ENCODE measurements at regions of chr14 and their contacts with region 1.

Region 1: DNA sequence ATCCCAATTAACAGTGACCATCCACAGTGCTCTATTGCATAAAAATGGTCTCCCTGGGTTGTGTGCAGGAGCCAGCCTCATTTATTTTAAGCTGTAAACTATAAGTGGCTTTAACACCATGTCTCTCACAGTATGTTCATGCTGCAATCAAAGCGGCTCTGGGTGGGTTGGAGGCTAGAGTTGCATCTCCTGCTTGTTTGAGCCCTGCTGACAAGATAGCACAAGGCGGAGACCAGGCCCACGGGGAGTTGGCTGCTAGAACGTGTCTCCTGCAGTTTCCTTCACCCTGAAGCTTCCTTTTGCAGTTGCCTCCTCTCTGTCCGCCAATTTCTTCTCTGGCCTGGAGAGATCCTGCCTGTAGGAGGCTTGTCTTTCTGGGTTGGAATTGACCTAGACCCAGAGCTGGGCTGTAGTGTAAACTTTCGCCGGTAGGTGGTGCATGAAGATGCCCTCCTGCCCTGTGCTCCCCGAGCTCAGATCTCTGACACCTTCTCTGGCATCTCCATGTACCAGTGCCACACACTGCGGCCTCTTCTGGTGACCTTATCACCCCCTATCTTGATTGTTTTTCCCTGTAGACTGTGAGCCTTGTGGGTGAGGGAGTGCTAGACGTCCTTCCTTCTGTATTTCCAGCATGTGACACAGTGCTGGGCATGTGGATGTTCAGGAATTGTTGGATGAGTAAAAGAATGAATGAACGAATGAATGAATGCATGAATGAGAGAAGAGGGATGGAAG is 10.3 kb downstream of the OTUB2 start:
- DNase-seq: peak; percentile 85
- H3K4me3 Mint-ChIP-seq: no peak overlapping the region
- H3K27ac Mint-ChIP-seq: no peak overlapping the region
- H3K4me1 Mint-ChIP-seq: peaks cover 7% of the 10 kb centered on the region
- H3K27me3 Mint-ChIP-seq: no peaks in the 10 kb centered on the region

Region 2: GRCh38 chr14:93797536-93797935 is 238.9 kb before region 1 on chr14:
- CTCF ChIA-PET with region 1: no interaction called
- POLR2A ChIA-PET with region 1: no interaction called
- DNase-seq: no peak
- H3K4me3 Mint-ChIP-seq: no peak overlapping the region
- H3K27ac Mint-ChIP-seq: no peak overlapping the region
- H3K4me1 Mint-ChIP-seq: no peaks in the 10 kb centered on the region
- H3K27me3 Mint-ChIP-seq: peaks cover 2% of the 10 kb centered on the region

Region 3: DNA sequence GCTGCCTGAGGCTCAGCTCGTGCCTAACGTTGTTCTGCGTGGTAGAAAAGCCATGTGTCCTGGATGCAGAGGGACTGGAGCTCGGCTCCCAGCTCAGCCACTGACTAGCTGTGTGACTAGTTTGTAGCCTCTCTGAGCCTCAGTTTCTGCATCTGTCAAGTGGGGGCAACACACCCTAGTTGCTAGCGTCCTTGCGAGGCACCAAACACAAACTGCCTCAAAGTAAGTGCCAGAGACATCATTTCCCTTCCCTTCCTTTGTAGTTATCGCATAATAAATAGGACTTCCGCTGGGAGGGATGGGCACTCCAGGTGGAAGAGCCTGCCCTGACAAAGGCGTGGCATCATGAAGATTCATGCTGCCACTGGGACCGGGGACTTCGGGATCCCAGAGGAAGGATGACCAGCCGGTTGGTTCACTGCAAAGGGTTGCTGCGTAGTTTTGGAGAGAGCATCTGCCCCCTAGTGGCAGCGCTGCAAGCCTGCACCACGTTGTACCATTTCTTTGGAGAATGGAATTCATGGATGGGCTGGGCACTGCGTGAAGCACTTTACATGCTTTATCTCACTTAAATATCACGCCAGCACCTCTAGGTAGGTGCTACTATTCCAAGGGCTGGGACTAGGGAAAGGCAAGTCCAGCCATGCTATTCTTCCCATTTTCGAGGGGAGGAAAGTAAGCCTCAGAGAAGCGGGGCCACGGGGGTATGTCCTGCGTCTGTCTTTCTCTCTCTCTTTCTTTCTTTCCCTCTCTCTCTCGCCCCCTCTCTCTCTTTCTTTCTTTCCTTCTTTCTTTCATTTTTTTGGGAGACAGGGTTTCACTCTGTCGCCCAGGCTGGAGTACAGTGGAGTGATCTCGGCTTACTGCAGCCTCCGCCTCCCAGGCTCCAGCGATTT is 34.7 kb before region 1 on chr14:
- CTCF ChIA-PET with region 1: interaction called, 11 read pairs
- POLR2A ChIA-PET with region 1: no interaction called
- DNase-seq: peak; percentile 63
- H3K4me3 Mint-ChIP-seq: no peak overlapping the region
- H3K27ac Mint-ChIP-seq: no peak overlapping the region
- H3K4me1 Mint-ChIP-seq: peaks cover 42% of the 10 kb centered on the region
- H3K27me3 Mint-ChIP-seq: peaks cover 6% of the 10 kb centered on the region

Region 4: DNA sequence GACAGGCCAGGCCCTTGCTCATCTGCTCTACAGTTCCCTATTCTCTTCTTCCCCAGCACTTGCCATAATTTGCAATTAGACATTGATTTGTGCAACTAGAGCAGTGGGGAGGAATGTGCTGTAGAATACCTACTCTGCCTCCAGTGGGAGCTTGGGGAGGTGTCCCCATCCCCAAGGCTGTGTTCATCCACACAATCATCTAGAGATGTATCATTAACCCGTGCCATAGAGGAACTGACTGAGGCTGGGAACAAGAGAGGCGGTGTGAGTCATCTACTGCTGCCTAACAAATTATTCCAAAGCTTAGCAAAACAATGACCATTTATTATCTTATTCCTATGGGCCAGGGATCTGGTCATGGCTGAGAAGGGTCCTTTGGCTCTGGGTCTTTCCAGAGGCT is 15.5 kb before region 1 on chr14:
- CTCF ChIA-PET with region 1: interaction called, 18 read pairs
- POLR2A ChIA-PET with region 1: no interaction called
- DNase-seq: no peak
- H3K4me3 Mint-ChIP-seq: no peak overlapping the region
- H3K27ac Mint-ChIP-seq: no peak overlapping the region
- H3K4me1 Mint-ChIP-seq: peaks cover 44% of the 10 kb centered on the region
- H3K27me3 Mint-ChIP-seq: peaks cover 16% of the 10 kb centered on the region

Region 5: DNA sequence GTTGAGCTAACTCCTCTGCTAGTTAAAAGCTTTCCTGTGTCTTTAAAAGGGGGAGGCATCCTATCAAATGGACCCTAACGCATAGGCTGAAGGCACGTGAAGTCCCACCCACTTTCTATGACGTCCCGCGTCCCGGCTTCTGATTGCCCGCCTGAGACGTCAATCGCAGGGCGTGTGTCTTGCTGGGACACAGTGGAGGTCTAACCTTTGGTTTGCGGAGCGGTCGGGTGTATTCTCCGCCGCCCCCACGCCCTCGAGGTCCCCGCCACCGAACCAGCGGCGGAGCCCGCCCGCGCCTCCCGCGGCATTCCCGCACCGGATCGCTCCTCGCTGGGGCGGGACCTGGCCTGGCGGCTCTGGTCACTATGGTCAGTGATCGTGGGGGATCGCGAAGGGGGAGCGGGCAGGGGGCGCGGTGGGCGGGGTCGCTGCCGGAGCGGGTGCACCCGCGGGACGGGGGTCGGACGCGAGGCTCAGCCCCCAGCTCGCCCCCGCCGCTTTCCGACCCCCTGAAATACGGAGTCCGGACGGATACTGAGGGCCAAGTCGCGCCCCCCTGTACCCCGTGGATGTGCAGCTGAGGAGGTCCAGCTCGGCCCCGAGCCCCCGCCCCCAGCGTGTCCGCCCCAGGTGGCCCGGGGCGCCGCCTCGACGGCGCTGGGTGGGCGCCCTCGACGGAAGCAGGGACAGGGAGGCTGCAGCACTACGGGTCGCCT is 10.2 kb before region 1 on chr14 and contains the start of gene OTUB2:
- CTCF ChIA-PET with region 1: interaction called, 18 read pairs
- POLR2A ChIA-PET with region 1: no interaction called
- DNase-seq: peak; percentile 97
- H3K4me3 Mint-ChIP-seq: peak within 1 kb of the TSS; percentile 73
- H3K27ac Mint-ChIP-seq: peak within 1 kb of the TSS; percentile 71
- H3K4me1 Mint-ChIP-seq: peaks cover 49% of the 10 kb centered on the region
- H3K27me3 Mint-ChIP-seq: no peaks in the 10 kb centered on the region
- total RNA-seq, gene OTUB2: 2.3 to 2.4 TPM

Region 6: GRCh38 chr14:94051115-94051514 is 14.6 kb after region 1 on chr14:
- CTCF ChIA-PET with region 1: interaction called, 14 read pairs
- POLR2A ChIA-PET with region 1: no interaction called
- DNase-seq: no peak
- H3K4me3 Mint-ChIP-seq: no peak overlapping the region
- H3K27ac Mint-ChIP-seq: no peak overlapping the region
- H3K4me1 Mint-ChIP-seq: peaks cover 36% of the 10 kb centered on the region
- H3K27me3 Mint-ChIP-seq: no peaks in the 10 kb centered on the region

Region 7: DNA sequence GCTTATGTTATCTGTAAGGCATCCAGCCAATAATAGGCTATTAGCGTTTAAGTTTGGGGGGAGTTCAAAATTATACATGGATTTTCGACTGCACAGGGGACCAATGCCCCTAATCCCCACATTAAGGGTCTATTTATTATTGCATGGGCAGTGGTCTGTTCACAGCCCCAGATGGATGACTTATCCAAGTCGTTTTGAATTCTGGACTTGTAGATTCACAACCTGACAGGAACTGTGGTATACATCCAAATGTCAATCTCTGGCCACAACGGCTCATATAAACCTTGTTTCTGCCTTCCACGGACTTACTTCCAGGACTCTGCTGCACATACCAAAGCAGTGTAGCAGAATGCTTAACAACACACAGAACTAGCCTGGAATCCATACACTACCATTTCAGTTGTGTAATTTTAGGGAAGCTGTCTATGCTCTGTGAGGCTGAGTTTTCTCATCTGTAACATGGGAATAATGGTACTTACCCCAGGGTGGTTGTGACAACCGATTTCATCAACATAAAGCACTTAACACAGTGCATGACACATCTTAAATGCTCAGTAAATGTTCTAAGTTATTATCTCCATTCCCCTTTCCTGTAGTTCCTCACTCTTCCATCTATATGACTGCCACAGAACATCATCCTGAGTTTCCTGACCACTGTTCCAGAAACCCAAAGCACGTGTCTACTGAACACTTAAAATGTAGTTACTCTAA is 40.8 kb after region 1 on chr14:
- CTCF ChIA-PET with region 1: interaction called, 11 read pairs
- POLR2A ChIA-PET with region 1: no interaction called
- DNase-seq: no peak
- H3K4me3 Mint-ChIP-seq: peak overlapping the region; percentile 13
- H3K27ac Mint-ChIP-seq: no peak overlapping the region
- H3K4me1 Mint-ChIP-seq: peaks cover 54% of the 10 kb centered on the region
- H3K27me3 Mint-ChIP-seq: no peaks in the 10 kb centered on the region

Region 8: GRCh38 chr14:94136575-94137331 is 100.3 kb after region 1 on chr14:
- CTCF ChIA-PET with region 1: interaction called, 23 read pairs
- POLR2A ChIA-PET with region 1: interaction called, 3 read pairs
- DNase-seq: peak; percentile 88
- H3K4me3 Mint-ChIP-seq: no peak overlapping the region
- H3K27ac Mint-ChIP-seq: no peak overlapping the region
- H3K4me1 Mint-ChIP-seq: peaks cover 10% of the 10 kb centered on the region
- H3K27me3 Mint-ChIP-seq: peaks cover 26% of the 10 kb centered on the region